GM12878 (cell line): ENCODE measurements at regions of chr18 and their contacts with region 1.

Region 1: GRCh38 chr18:34322365-34323289 is 97.9 kb upstream of the NOL4 start:
- DNase-seq: peak; percentile 59
- ATAC-seq: peak; percentile 74
- H3K4me3 ChIP-seq: no peak overlapping the region
- H3K27ac ChIP-seq: peak overlapping the region; percentile 61
- H3K4me1 ChIP-seq: peaks cover 6% of the 10 kb centered on the region
- H3K27me3 ChIP-seq: no peaks in the 10 kb centered on the region
- CTCF ChIP-seq: peak; percentile 67 to 73 (median 69)
- EP300 ChIP-seq: peak; percentile 86 to 91; a peak in 3 of 4 replicates
- POLR2A ChIP-seq: no peak
- RAD21 ChIP-seq: peak; percentile 90

Region 2: GRCh38 chr18:33744032-33744955 is 578.3 kb before region 1 on chr18:
- CTCF ChIA-PET with region 1: no interaction called
- POLR2A ChIA-PET with region 1: no interaction called
- RAD21 ChIA-PET with region 1: no interaction called
- SMC1A ChIA-PET with region 1: no interaction called
- in situ Hi-C with region 1: no loop called
- intact Hi-C with region 1: no loop called
- DNase-seq: no peak
- ATAC-seq: no peak
- H3K4me3 ChIP-seq: no peak overlapping the region
- H3K27ac ChIP-seq: no peak overlapping the region
- H3K4me1 ChIP-seq: no peaks in the 10 kb centered on the region
- H3K27me3 ChIP-seq: peaks cover 0 to 4% of the 10 kb centered on the region in 2 experiments; a peak in 2 of 4 replicates
- CTCF ChIP-seq: 0 out of 6 replicates have a peak, but pooled peaks of 1 of the 3 experiments have one; percentile 8
- EP300 ChIP-seq: no peak
- POLR2A ChIP-seq: no peak
- RAD21 ChIP-seq: no peak

Region 3: DNA sequence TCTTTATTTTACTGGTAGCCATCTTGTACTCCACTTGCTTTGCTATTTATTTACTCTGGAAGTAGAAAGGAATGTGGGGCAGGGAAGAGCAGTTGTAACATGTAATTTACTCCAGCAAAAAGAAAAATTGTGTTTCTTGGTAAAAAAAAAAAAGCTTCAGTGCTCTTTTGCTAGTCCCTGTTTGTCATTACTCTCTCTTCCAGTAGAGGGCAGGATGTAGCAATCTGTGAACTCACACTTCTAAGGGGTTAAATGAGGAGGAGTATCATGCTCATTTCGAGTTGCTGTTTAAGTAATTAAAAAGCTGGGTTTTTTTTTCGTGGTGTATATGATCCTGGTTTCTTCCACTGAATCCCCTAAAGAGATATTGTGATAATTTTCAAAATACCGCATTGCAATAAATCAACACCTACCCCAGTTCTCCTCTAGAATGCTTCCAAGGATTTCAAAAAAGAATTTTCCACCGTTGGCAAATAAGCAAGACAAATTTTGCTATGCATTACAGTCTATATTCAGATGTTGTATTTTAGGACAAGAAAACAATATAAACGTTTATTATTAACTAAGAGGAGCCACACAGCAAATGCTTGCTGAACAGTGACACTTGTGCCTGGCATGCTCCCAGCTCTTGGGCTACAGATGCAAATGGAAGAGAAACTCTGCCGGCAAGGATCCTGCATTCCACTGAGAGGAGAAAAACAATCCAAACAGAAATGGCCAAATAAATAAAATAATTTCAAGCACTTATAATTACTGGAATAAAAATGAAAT is 483.0 kb before region 1 on chr18:
- CTCF ChIA-PET with region 1: interaction called, 87 read pairs
- POLR2A ChIA-PET with region 1: interaction called, 5 read pairs
- RAD21 ChIA-PET with region 1: interaction called, 76 read pairs
- SMC1A ChIA-PET with region 1: interaction called, 67 read pairs
- in situ Hi-C with region 1: loop called (anchors 10 kb)
- intact Hi-C with region 1: loop called (anchors 2 kb)
- DNase-seq: no peak
- ATAC-seq: peak; percentile 72
- H3K4me3 ChIP-seq: no peak overlapping the region
- H3K27ac ChIP-seq: no peak overlapping the region
- H3K4me1 ChIP-seq: no peaks in the 10 kb centered on the region
- H3K27me3 ChIP-seq: no peaks in the 10 kb centered on the region
- CTCF ChIP-seq: peak; percentile 68 to 78 (median 75)
- EP300 ChIP-seq: no peak
- POLR2A ChIP-seq: no peak
- RAD21 ChIP-seq: peak; percentile 80

Region 4: DNA sequence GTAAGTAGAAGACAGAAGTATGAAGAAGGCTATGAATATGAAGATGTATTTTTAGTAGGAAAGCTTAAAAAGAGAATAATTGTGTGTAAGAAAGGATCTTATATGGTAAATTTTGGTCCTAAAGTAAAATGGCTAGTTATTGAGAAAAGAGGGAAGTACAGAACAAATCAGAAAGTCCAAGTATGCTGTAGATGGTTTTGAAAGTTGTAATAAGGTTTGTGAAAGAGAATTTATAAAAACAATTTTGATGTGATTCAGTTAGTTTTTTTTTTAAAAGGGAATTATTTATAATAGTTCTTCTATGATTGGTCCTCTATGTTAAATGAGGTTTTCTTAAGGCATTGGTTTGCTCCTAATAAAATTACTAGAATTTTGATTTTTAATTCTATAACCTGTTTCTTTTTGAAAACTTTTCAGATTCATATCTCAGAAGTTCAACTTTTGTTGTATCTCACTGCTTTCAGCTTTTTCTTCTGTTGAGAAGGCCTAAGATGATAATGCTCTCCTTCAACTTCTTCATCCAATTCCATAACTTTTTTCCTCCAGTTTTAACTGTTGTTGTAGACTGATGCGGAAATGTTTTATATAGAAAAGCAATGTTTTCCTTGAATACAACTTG is 420.6 kb before region 1 on chr18:
- CTCF ChIA-PET with region 1: no interaction called
- POLR2A ChIA-PET with region 1: no interaction called
- RAD21 ChIA-PET with region 1: no interaction called
- SMC1A ChIA-PET with region 1: no interaction called
- in situ Hi-C with region 1: no loop called
- intact Hi-C with region 1: no loop called
- DNase-seq: no peak
- ATAC-seq: no peak
- H3K4me3 ChIP-seq: no peak overlapping the region
- H3K27ac ChIP-seq: no peak overlapping the region
- H3K4me1 ChIP-seq: no peaks in the 10 kb centered on the region
- H3K27me3 ChIP-seq: no peaks in the 10 kb centered on the region
- CTCF ChIP-seq: no peak
- EP300 ChIP-seq: no peak
- POLR2A ChIP-seq: no peak
- RAD21 ChIP-seq: no peak

Region 5: DNA sequence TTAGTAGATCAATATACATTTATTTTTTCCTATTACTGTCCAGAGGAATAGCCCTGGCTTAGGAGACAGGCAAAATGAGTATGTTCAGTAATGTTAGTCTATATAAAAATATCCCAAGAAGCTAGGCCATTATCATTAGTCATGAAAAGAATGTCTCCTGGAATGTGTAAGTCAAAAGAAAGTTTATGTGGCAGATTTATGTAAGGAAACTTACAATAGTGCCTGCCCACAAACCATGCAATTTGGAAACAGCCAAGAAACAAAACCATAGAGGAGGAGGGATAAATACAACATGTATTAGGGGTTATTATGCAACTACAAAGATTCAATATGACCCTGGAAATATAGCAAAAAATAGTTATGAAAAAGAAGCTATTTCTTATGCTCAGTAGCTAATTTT is 194.2 kb before region 1 on chr18:
- CTCF ChIA-PET with region 1: interaction called, 341 read pairs
- POLR2A ChIA-PET with region 1: interaction called, 9 read pairs
- RAD21 ChIA-PET with region 1: interaction called, 247 read pairs
- SMC1A ChIA-PET with region 1: interaction called, 301 read pairs
- in situ Hi-C with region 1: loop called (anchors 5 kb)
- intact Hi-C with region 1: no loop called
- DNase-seq: no peak
- ATAC-seq: no peak
- H3K4me3 ChIP-seq: no peak overlapping the region
- H3K27ac ChIP-seq: no peak overlapping the region
- H3K4me1 ChIP-seq: no peaks in the 10 kb centered on the region
- H3K27me3 ChIP-seq: no peaks in the 10 kb centered on the region
- CTCF ChIP-seq: no peak
- EP300 ChIP-seq: no peak
- POLR2A ChIP-seq: no peak
- RAD21 ChIP-seq: no peak

Region 6: GRCh38 chr18:34196256-34196655 is 126.4 kb before region 1 on chr18:
- CTCF ChIA-PET with region 1: interaction called, 3 read pairs
- POLR2A ChIA-PET with region 1: no interaction called
- RAD21 ChIA-PET with region 1: interaction called, 24 read pairs
- SMC1A ChIA-PET with region 1: interaction called, 4 read pairs
- in situ Hi-C with region 1: no loop called
- intact Hi-C with region 1: no loop called
- DNase-seq: no peak
- ATAC-seq: peak; percentile 35; the same call in 2 of the 3 replicates
- H3K4me3 ChIP-seq: no peak overlapping the region
- H3K27ac ChIP-seq: no peak overlapping the region
- H3K4me1 ChIP-seq: no peaks in the 10 kb centered on the region
- H3K27me3 ChIP-seq: no peaks in the 10 kb centered on the region
- CTCF ChIP-seq: no peak
- EP300 ChIP-seq: no peak
- POLR2A ChIP-seq: no peak
- RAD21 ChIP-seq: no peak

Region 7: DNA sequence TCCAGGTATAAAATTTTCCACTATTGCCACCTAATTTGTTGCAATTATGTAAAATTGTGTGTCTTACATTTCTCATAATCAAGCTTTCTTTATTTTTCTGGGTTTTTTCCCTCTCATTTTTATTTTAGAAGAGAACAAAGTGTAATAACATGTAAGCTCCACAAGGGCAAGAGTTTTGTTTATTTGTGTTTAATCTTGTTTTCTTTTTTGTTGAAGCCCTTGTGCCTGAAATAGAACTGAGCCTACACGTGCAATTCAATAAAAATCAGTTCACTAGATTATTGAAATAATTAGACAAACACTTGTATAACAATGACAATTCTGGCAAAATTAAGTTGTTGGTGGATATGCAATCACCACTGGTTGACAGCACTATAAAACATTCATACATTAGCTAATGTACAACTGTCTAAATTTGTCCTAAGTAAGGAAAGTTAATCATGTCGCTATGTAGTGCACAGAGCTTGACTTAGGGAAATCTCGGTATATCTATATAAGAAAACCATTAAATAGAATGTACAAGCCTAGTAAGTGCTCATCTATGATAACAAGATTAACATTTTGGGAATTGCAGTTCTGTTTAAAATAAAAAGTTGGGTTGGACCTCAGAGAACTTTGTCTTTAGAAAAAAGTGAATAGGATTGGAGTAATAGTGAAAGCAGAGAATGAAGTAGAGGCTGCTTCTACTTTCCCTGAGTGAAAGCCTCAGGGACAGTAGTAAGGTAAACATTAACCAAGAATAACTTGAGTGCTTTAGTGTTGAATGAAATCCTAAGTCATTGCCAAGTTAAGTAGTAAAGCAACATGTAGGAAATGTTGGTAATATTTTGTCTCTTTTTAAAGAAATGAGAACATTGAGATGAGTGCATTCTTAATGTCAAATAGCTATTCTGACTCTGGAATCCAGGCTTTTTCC is 60.5 kb before region 1 on chr18:
- CTCF ChIA-PET with region 1: interaction called, 10 read pairs
- POLR2A ChIA-PET with region 1: no interaction called
- RAD21 ChIA-PET with region 1: interaction called, 6 read pairs
- SMC1A ChIA-PET with region 1: interaction called, 4 read pairs
- in situ Hi-C with region 1: no loop called
- intact Hi-C with region 1: no loop called
- DNase-seq: no peak
- ATAC-seq: peak; percentile 96
- H3K4me3 ChIP-seq: no peak overlapping the region
- H3K27ac ChIP-seq: no peak overlapping the region
- H3K4me1 ChIP-seq: no peaks in the 10 kb centered on the region
- H3K27me3 ChIP-seq: no peaks in the 10 kb centered on the region
- CTCF ChIP-seq: no peak
- EP300 ChIP-seq: peak in 1 of 2 experiments; percentile 35; a peak in 1 of 4 replicates
- POLR2A ChIP-seq: no peak
- RAD21 ChIP-seq: no peak

Region 8: GRCh38 chr18:34352385-34353163 is 29.9 kb after region 1 on chr18:
- CTCF ChIA-PET with region 1: interaction called, 40 read pairs
- POLR2A ChIA-PET with region 1: interaction called, 19 read pairs
- RAD21 ChIA-PET with region 1: interaction called, 69 read pairs
- SMC1A ChIA-PET with region 1: interaction called, 95 read pairs
- in situ Hi-C with region 1: no loop called
- intact Hi-C with region 1: no loop called
- DNase-seq: no peak
- ATAC-seq: no peak
- H3K4me3 ChIP-seq: no peak overlapping the region
- H3K27ac ChIP-seq: no peak overlapping the region
- H3K4me1 ChIP-seq: no peaks in the 10 kb centered on the region
- H3K27me3 ChIP-seq: no peaks in the 10 kb centered on the region
- CTCF ChIP-seq: peak in 1 of 3 experiments; percentile 9; a peak in 1 of 6 replicates
- EP300 ChIP-seq: no peak
- POLR2A ChIP-seq: no peak
- RAD21 ChIP-seq: no peak

Region 9: GRCh38 chr18:34512389-34512788 is 189.8 kb after region 1 on chr18:
- CTCF ChIA-PET with region 1: no interaction called
- POLR2A ChIA-PET with region 1: no interaction called
- RAD21 ChIA-PET with region 1: interaction called, 3 read pairs
- SMC1A ChIA-PET with region 1: interaction called, 16 read pairs
- in situ Hi-C with region 1: no loop called
- intact Hi-C with region 1: no loop called
- DNase-seq: no peak
- ATAC-seq: 0 out of 3 replicates have a peak, but pooled peaks have one; percentile 18
- H3K4me3 ChIP-seq: no peak overlapping the region
- H3K27ac ChIP-seq: no peak overlapping the region
- H3K4me1 ChIP-seq: no peaks in the 10 kb centered on the region
- H3K27me3 ChIP-seq: no peaks in the 10 kb centered on the region
- CTCF ChIP-seq: no peak
- EP300 ChIP-seq: no peak
- POLR2A ChIP-seq: no peak
- RAD21 ChIP-seq: no peak